ENCODE measurements at regions of chr1 and their contacts with region 1.

Region 1: GRCh38 chr1:67760030-67760821 is 73.0 kb downstream of the GNG12 start:
- DNase-seq: peak; percentile 85
- H3K4me3 ChIP-seq: no peak overlapping the region
- H3K27ac ChIP-seq: peak overlapping the region; percentile 74
- H3K4me1 ChIP-seq: peaks cover 8% of the 10 kb centered on the region
- H3K27me3 ChIP-seq: no peaks in the 10 kb centered on the region
- CTCF ChIP-seq: peak; percentile 90

Region 2: DNA sequence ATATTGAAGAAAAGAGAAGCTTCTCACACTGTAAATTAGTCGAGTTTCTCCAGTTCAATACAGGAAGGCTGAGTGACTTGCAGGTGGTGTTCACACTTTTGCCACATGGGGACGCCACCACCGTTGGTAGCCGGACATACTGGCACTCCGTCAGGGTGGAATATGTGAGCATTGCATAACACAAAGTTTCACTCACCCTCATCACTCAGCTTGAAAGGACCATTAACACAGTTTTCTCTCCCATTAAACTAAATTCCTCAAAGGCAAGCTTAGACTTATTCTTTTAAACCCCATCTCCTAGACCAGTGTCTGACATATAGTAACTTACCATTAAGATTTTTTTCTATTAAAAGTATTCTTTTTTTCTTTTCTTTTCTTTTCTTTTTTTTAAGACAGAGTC is 224.8 kb before region 1 on chr1:
- intact Hi-C with region 1: loop called (anchors 2 kb)
- DNase-seq: peak; percentile 87
- H3K4me3 ChIP-seq: no peak overlapping the region
- H3K27ac ChIP-seq: no peak overlapping the region
- H3K4me1 ChIP-seq: peaks cover 6% of the 10 kb centered on the region
- H3K27me3 ChIP-seq: no peaks in the 10 kb centered on the region
- CTCF ChIP-seq: peak; percentile 85

Region 3: DNA sequence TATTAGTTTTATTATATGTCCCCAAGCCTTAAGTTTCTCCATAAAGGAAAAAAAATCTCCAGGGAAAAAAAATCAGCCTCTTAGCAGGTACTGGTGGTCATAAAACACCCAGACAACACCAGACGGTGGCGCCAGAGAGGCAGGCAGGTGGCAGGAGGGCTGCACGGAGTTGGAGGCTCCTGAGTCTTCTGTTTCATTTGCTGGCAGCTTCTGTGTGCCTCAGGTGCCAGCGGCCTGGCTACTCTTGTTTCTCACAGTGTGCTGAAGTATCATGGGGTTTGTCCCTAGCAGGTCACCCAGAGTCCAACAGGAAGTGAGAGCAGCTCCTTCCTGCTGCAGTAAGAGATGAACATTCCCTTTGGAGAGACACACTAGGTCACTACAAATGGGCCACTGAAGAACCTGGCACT is 198.5 kb before region 1 on chr1:
- intact Hi-C with region 1: loop called (anchors 5 kb)
- DNase-seq: peak; percentile 98
- H3K4me3 ChIP-seq: no peak overlapping the region
- H3K27ac ChIP-seq: no peak overlapping the region
- H3K4me1 ChIP-seq: no peaks in the 10 kb centered on the region
- H3K27me3 ChIP-seq: no peaks in the 10 kb centered on the region
- CTCF ChIP-seq: peak; percentile 74

Region 4: DNA sequence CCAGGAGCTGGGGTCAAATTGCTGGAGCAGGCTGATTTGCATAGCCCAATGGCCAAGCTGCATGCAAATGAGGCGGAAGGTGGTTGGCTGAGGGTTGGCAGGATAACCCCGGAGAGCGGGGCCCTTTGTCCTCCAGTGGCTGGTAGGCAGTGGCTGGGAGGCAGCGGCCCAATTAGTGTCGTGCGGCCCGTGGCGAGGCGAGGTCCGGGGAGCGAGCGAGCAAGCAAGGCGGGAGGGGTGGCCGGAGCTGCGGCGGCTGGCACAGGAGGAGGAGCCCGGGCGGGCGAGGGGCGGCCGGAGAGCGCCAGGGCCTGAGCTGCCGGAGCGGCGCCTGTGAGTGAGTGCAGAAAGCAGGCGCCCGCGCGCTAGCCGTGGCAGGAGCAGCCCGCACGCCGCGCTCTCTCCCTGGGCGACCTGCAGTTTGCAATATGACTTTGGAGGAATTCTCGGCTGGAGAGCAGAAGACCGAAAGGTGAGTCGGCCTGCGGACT is 75.1 kb before region 1 on chr1 and contains the start of gene GADD45A:
- intact Hi-C with region 1: loop called (anchors 5 kb)
- DNase-seq: peak; percentile 99
- H3K4me3 ChIP-seq: peak within 1 kb of the TSS; percentile 72
- H3K27ac ChIP-seq: peak within 1 kb of the TSS; percentile 92
- H3K4me1 ChIP-seq: peaks cover 9% of the 10 kb centered on the region
- H3K27me3 ChIP-seq: no peaks in the 10 kb centered on the region
- CTCF ChIP-seq: no peak
- total RNA-seq, gene GADD45A: 29.0 to 29.4 TPM

Region 5: GRCh38 chr1:68346188-68346808 is 586.1 kb after region 1 on chr1:
- intact Hi-C with region 1: loop called (anchors 10 kb)
- DNase-seq: no peak
- H3K4me3 ChIP-seq: no peak overlapping the region
- H3K27ac ChIP-seq: no peak overlapping the region
- H3K4me1 ChIP-seq: no peaks in the 10 kb centered on the region
- H3K27me3 ChIP-seq: no peaks in the 10 kb centered on the region
- CTCF ChIP-seq: peak; percentile 45